T-cell (primary cell): ENCODE measurements at regions of chr1 and their contacts with region 1.

Region 1: DNA sequence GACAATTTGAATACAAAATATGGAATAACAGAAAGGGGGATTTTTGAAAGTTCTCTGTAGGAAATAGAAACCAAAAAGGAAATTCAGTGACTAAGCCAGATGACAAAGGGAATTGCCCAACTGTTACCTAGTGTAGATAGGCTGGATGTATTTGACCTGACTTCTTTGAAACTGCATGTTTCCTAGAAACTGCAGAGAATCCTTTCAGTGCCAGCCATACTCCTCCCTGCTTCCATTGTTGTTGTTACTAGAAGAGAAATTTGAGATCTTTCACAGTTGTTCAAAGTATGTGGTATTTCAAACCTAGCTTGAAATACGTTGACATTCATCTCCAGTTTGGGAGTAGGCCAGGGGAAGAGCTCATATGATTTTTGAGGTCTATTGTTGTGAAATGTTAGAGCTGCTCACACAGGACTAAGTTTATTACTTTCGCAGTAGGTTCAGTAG is 1.8 kb upstream of the GBP5 start:
- DNase-seq: peak in 3 of 35 experiments; percentile 9 to 74 (median 30)
- ATAC-seq: peak in 3 of 4 experiments; percentile 23 to 56 (median 24)
- H3K4me3 ChIP-seq: peak overlapping the region in 1 of 2 donors; percentile 28
- H3K4me3 Mint-ChIP-seq: peak overlapping the region; percentile 71 to 82 (median 76)
- H3K27ac ChIP-seq: peak overlapping the region; percentile 87
- H3K27ac Mint-ChIP-seq: peak overlapping the region; percentile 92 to 99
- H3K4me1 ChIP-seq: peaks cover 37 to 51% of the 10 kb centered on the region in 2 experiments
- H3K4me1 Mint-ChIP-seq: peaks cover 62 to 90% (median 79%) of the 10 kb centered on the region in 3 donors
- H3K27me3 ChIP-seq: no peaks in the 10 kb centered on the region
- H3K27me3 Mint-ChIP-seq: no peaks in the 10 kb centered on the region

Region 2: GRCh38 chr1:89243046-89243445 is 31.4 kb before region 1 on chr1:
- CTCF ChIA-PET with region 1: no interaction called
- POLR2A ChIA-PET with region 1: interaction called in 1 of 2 experiments, 10 read pairs
- DNase-seq: no peak
- ATAC-seq: no peak
- H3K4me3 ChIP-seq: no peak overlapping the region
- H3K4me3 Mint-ChIP-seq: no peak overlapping the region
- H3K27ac ChIP-seq: no peak overlapping the region
- H3K27ac Mint-ChIP-seq: no peak overlapping the region
- H3K4me1 ChIP-seq: no peaks in the 10 kb centered on the region
- H3K4me1 Mint-ChIP-seq: peaks cover 17 to 32% (median 28%) of the 10 kb centered on the region in 3 donors
- H3K27me3 ChIP-seq: no peaks in the 10 kb centered on the region
- H3K27me3 Mint-ChIP-seq: no peaks in the 10 kb centered on the region